Activated CD4-positive, alpha-beta T cell treated with anti-CD3 and anti-CD28 coated beads, Interleukin-2, amount 10 ng/mL, durations not matched to agents 24 days and 14 days (primary cell): ENCODE measurements at regions of chr11 and their contacts with region 1.

Region 1: DNA sequence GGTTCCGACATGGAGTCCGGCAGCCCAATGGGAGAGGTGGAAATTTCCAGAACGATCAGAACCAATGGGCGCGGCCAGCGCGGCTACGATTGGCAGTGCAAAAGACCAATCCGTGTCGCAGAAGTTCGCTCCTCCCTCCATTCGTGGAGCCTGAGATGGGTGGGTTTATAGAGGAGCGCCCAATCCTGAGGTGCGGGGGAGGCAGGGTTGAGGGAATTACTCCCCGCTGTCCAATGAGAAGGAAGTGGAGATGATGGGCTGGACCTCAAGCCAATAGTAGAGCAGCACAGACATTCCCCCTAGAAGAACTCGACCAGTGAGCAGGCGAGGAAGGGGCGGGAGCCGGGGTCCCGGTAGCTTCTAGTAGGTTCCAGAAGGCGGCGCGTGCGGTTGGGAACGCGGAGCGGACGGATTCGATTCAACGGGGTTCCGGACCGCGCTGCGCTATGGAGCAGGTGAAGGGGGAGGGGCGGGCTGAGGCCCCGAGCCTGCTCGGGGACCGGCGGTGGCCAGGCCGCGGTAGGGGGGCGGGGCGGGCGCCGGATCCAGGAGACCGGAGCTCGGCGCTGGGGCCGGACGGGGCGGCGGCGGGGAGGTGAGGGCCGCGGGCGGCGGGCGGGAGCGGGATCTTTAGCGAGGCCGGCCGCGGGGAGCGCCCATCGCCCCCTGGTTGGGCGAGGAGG is at the start of gene STIP1:
- DNase-seq: peak; percentile 99
- H3K4me3 Mint-ChIP-seq: no peak within 1 kb of the TSS
- H3K27ac Mint-ChIP-seq: peak within 1 kb of the TSS; percentile 98
- H3K4me1 Mint-ChIP-seq: peaks cover 31% of the 10 kb centered on the region
- H3K27me3 Mint-ChIP-seq: peaks cover 4% of the 10 kb centered on the region
- total RNA-seq, gene STIP1: 521 and 535 TPM in 2 replicates

Region 2: DNA sequence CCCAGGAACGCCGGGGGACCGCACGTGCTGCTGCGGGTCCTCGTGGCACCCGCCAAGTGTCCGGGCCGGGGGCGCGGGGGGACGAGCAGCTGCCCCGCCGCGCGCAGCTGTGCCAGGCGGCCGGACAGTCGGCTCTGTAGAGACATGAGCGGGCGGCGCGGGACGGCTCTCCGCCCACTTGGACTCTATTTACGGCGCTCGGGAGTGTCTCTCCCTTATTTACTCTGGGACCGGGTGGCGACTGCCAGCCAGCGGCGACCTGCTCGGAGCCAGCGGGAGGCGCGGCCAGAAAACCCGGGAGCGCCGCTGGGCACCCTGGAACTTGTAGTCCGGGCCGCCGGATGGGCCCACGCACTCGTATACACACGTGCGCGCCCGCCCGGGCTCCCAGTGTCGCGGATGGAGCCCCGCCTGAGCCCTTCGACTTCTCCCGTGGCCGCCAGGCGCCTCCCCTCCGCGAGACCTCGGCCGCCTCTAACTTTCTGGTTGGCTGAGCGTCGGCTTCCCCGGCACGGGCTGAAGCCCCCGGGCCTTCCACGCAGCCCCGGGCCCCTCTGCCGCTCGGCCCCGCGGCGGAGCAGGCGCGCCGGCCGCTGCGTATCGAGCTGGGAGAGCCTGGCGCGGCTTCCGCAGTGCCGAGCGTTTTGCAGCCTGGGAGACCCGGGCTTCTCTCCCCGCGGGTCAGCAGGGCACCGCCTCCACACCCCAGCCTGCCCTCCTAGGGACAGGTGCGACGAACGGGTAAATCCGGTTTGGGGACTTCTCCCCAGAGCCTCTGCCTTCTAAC is 19.9 kb before region 1 on chr11 and contains the start of gene MACROD1:
- intact Hi-C with region 1: loop called (anchors 2 kb)
- DNase-seq: peak; percentile 95
- H3K4me3 Mint-ChIP-seq: peak within 1 kb of the TSS; percentile 90
- H3K27ac Mint-ChIP-seq: peak within 1 kb of the TSS; percentile 84
- H3K4me1 Mint-ChIP-seq: peaks cover 10% of the 10 kb centered on the region
- H3K27me3 Mint-ChIP-seq: no peaks in the 10 kb centered on the region
- total RNA-seq, gene MACROD1: 28.6 and 29.6 TPM in 2 replicates

Region 3: GRCh38 chr11:64204464-64204989 is 18.6 kb after region 1 on chr11:
- intact Hi-C with region 1: loop called (anchors 1 kb)
- DNase-seq: peak; percentile 93
- H3K4me3 Mint-ChIP-seq: peak overlapping the region; percentile 69
- H3K27ac Mint-ChIP-seq: peak overlapping the region; percentile 80
- H3K4me1 Mint-ChIP-seq: peaks cover 33% of the 10 kb centered on the region
- H3K27me3 Mint-ChIP-seq: no peaks in the 10 kb centered on the region

Region 4: GRCh38 chr11:64225612-64226506 is 39.9 kb after region 1 on chr11 and contains the starts of genes NUDT22 and TRPT1:
- intact Hi-C with region 1: loop called (anchors 1 kb)
- DNase-seq: peak; percentile 99
- H3K4me3 Mint-ChIP-seq: peak within 1 kb of the TSS; percentile 91
- H3K27ac Mint-ChIP-seq: peak within 1 kb of the TSS; percentile 86
- H3K4me1 Mint-ChIP-seq: peaks cover 27% of the 10 kb centered on the region
- H3K27me3 Mint-ChIP-seq: no peaks in the 10 kb centered on the region
- total RNA-seq, gene NUDT22: 66.1 and 72.6 TPM in 2 replicates
- total RNA-seq, gene TRPT1: 29.8 and 31.7 TPM in 2 replicates